ENCODE measurements at regions of chr17 and their contacts with region 1.

Region 1: DNA sequence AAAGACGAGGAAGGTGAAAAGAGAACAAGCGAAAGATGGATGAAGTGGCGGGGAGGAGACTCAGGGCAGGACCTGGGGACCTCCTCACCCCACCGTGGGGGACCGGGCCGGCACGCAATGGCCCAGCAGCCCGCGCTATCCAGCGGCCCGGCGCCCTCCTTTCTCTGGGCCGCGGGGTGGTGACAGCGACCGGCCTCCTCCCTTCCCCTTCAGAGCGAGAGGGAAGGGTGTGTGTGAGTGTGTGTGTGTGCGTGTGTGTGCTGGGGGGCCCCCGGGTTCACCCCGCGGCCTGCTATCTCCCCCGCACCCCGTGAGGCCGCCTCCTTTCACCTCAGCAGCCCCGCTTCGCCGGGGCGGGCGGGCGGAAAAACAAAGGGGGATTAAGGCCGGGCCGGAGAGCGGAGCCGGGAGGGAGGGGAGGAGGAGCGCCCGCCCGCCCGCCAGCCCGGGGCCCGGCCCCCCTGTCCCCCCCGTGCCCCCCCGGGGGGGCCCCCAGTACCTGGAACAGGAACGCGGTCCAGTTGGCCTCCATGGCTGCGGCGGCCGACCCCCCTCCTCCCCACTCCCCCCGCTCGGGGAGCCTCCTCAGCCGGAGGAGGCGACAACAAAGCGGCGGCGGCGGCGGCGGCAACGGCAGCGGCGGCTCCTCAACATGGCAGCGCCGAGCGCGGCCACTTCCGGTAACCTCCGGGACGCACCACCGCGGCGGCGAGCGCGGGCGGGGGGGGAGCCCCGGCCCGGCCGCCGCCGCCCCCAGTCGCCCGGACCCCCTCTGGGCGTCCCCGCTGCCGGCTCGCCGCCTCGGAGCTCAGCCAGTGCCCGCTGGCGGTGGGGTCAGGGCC is at the start of gene VEZF1:
- DNase-seq: peak; percentile 54 to 68
- H3K4me3 ChIP-seq: peak within 1 kb of the TSS; percentile 87 to 93 (median 92)
- H3K27ac ChIP-seq: peak within 1 kb of the TSS; percentile 99
- H3K4me1 ChIP-seq: peaks cover 4 to 11% of the 10 kb centered on the region in 2 donors
- H3K27me3 ChIP-seq: no peaks in the 10 kb centered on the region
- CTCF ChIP-seq: no peak
- POLR2A ChIP-seq: peak; percentile 23
- total RNA-seq, gene VEZF1: 55.5 to 76.5 (median 66.9) TPM

Region 2: DNA sequence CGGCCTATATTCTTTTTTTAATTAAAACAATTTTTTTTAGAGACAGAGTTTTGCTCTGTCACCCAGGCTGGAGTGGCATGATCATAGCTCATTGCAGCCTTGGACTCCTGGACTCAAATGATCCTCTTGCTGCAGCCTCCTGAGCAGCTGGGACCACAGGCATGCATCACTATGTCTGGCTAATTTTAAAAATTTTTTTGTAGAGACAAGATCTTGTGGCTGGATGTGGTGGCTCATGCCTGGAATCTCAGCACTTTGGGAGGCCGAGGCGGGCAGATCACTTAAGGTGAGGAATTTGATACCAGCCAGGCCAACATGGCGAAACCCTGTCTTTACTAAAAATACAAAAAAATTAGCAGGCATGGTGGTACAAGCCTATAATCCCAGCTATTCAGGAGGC is 786.3 kb before region 1 on chr17:
- intact Hi-C with region 1: no loop called
- DNase-seq: no peak
- H3K4me3 ChIP-seq: no peak overlapping the region
- H3K27ac ChIP-seq: no peak overlapping the region
- H3K4me1 ChIP-seq: no peaks in the 10 kb centered on the region
- H3K27me3 ChIP-seq: no peaks in the 10 kb centered on the region
- CTCF ChIP-seq: no peak
- POLR2A ChIP-seq: no peak

Region 3: DNA sequence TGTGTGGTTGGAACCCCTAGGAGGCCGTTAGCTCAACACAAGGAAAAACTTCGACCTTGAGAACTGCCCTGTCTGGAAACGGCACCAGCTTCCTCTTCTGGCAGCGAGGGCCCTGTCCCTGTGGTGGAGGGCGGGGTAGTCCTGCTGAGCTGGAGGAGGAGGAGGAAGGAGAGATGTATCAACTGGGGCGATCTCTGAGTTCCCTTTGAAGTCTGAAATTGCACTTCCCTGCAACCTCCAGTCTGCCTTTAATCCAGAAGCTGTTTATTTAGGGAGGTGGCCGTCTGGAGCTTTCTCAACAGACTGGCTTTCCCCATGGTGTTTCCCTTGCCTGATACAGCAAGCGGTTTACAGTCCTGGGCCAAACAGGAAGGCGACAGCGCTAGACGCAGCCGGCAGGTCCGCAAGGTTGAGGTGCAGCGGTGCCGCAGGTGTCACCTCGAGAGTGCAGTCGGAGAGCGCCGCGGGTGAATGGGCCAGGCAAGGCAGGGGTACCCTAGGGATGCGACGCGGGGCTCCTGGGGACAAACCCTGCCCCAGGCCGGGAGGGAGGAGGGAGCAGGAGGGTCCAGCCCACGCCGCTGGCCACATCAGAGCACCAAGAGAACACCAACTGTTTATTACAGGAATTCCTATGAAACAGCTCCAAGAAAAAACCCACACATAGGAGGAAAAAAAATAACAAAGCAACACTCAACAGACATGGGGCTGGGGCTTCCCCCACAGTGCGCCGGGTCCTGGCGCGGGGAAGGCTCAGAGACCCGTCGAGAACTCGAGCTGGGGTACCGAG is 126.6 kb before region 1 on chr17:
- intact Hi-C with region 1: loop called (anchors 5 kb)
- DNase-seq: peak in 1 of 2 donors; percentile 62
- H3K4me3 ChIP-seq: peak overlapping the region; percentile 43 to 70 (median 53)
- H3K27ac ChIP-seq: peak overlapping the region; percentile 67 to 74
- H3K4me1 ChIP-seq: peaks cover 7% of the 10 kb centered on the region in 2 donors
- H3K27me3 ChIP-seq: no peaks in the 10 kb centered on the region
- CTCF ChIP-seq: no peak
- POLR2A ChIP-seq: no peak

Region 4: GRCh38 chr17:57939797-57940196 is 48.0 kb before region 1 on chr17:
- intact Hi-C with region 1: no loop called
- DNase-seq: no peak
- H3K4me3 ChIP-seq: no peak overlapping the region
- H3K27ac ChIP-seq: peak overlapping the region; percentile 41 to 62
- H3K4me1 ChIP-seq: peaks cover 16 to 23% of the 10 kb centered on the region in 2 donors
- H3K27me3 ChIP-seq: no peaks in the 10 kb centered on the region
- CTCF ChIP-seq: no peak
- POLR2A ChIP-seq: no peak

Region 5: GRCh38 chr17:57956291-57957119 is 31.3 kb before region 1 on chr17:
- intact Hi-C with region 1: loop called (anchors 2 kb)
- DNase-seq: peak; percentile 16 to 41
- H3K4me3 ChIP-seq: no peak overlapping the region
- H3K27ac ChIP-seq: no peak overlapping the region
- H3K4me1 ChIP-seq: no peaks in the 10 kb centered on the region
- H3K27me3 ChIP-seq: no peaks in the 10 kb centered on the region
- CTCF ChIP-seq: no peak
- POLR2A ChIP-seq: no peak

Measured in breast epithelium (tissue), 4 donors.